Gastrocnemius medialis (tissue), 4 donors: ENCODE measurements at regions of chr22 and their contacts with region 1.

Region 1: DNA sequence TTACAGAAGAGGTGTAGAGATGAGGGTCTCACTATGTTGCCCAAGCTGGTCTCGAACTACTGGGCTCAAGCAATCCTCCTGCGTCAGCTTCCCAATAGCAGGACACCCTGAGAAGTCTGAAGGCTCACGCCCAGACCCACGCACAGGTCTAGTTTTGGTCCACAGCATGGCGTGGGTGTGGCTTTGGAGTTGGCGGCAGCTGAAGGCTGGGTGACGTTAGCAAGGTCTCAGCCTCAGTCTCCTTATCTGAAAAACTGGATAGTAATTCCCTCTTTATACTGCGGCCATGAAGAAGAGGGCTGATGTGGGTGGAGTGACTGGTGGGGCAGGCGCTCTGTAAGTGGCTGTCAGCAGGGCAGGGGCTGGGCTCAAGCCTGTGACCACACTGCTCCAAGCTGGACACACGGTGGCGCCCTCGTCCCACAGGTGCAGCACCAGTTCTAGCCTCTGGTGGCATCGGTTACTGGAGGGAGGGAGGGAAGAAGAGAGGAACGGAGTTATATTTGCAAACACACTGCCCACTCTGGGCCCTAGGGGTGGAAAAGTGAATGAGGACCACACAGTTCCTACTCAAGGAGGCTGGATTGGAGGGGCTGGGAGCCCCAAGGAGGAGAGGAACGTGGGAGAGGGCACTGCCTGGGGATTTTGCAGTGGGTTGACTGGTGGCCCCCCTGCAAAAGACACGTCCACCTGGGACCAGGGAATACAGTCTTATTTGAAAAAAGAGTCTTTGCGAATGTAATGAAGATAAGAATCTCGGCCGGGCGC is 19.6 kb upstream of the CARD10 start:
- DNase-seq: peak; percentile 80 to 82
- ATAC-seq: peak; percentile 91 to 97
- H3K4me3 ChIP-seq: no peak overlapping the region
- H3K27ac ChIP-seq: no peak overlapping the region
- H3K4me1 ChIP-seq: no peaks in the 10 kb centered on the region
- H3K27me3 ChIP-seq: no peaks in the 10 kb centered on the region
- CTCF ChIP-seq: peak; percentile 89 to 94 (median 92)
- POLR2A ChIP-seq: no peak

Region 2: GRCh38 chr22:37484133-37484824 is 54.5 kb before region 1 on chr22:
- in situ Hi-C with region 1: no loop called
- intact Hi-C with region 1: no loop called
- DNase-seq: peak; percentile 47 to 61
- ATAC-seq: peak in 1 of 2 donors; percentile 43
- H3K4me3 ChIP-seq: peak overlapping the region; percentile 33 to 53 (median 42)
- H3K27ac ChIP-seq: peak overlapping the region; percentile 51 to 74 (median 67)
- H3K4me1 ChIP-seq: peaks cover 5 to 16% of the 10 kb centered on the region in 2 donors
- H3K27me3 ChIP-seq: peaks cover 0 to 8% (median 3%) of the 10 kb centered on the region in 3 donors
- CTCF ChIP-seq: no peak
- POLR2A ChIP-seq: no peak

Region 3: GRCh38 chr22:37566903-37567820 is 28.4 kb after region 1 on chr22:
- in situ Hi-C with region 1: loop called in 2 of 4 experiments (anchors 5 kb)
- intact Hi-C with region 1: loop called (anchors 1 kb)
- DNase-seq: peak; percentile 41 to 61
- ATAC-seq: peak; percentile 73 to 75
- H3K4me3 ChIP-seq: no peak overlapping the region
- H3K27ac ChIP-seq: peak overlapping the region; percentile 34 to 83 (median 52)
- H3K4me1 ChIP-seq: peaks cover 14 to 20% of the 10 kb centered on the region in 2 donors
- H3K27me3 ChIP-seq: peaks cover 3 to 17% (median 13%) of the 10 kb centered on the region in 3 donors
- CTCF ChIP-seq: peak; percentile 90 to 97 (median 93)
- POLR2A ChIP-seq: no peak

Region 4: DNA sequence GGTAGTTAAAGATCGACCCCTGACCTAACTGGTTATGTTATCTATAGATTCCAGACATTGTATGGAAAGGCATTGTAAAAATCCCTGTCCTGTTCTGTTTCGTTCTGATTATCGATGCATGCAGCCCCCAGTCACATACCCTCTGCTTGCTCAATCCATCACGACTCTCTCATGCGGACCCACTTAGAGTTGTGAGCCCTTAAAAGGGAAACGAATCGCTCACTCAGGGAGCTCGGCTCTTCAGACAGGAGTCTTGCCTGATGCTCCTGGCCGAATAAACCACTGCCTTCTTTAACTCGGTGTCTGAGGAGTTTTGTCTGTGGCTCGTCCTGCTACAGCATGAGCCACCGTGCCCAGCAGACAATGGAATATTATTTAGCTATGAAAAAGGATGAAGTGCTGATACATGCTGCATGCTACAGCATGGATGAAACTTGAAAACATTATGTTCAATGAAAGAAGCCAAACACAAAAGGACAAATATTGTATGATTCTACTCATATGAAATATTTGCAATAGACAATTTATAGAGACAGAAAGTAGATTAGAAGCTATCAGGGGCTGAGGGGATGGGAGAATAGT is 53.1 kb after region 1 on chr22:
- in situ Hi-C with region 1: loop called in 1 of 4 experiments (anchors 10 kb)
- intact Hi-C with region 1: loop called (anchors 1 kb)
- DNase-seq: no peak
- ATAC-seq: no peak
- H3K4me3 ChIP-seq: no peak overlapping the region
- H3K27ac ChIP-seq: no peak overlapping the region
- H3K4me1 ChIP-seq: no peaks in the 10 kb centered on the region
- H3K27me3 ChIP-seq: no peaks in the 10 kb centered on the region
- CTCF ChIP-seq: no peak
- POLR2A ChIP-seq: no peak

Region 5: DNA sequence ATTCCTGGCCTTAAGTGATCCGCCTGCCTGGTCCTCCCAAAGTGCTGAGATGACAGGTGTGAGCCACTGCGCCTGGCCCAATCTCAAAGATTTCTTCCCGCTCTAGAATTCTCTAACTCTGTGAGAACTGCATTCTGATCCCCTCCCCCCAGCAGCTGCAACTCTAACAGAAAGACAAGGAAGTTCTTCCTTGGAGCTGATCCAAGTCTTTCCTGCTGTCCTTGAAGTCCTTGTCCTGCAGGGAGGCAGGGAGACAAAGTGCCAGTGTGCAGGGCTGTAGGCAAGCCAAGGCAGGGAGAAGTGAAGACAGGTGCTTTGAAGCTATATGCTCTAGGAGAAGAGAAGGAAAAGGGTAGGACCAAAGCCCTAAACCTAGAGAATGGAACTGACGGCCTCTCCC is 60.4 kb after region 1 on chr22:
- in situ Hi-C with region 1: loop called in 1 of 4 experiments (anchors 10 kb)
- intact Hi-C with region 1: no loop called
- DNase-seq: peak in 1 of 2 donors; percentile 41
- ATAC-seq: peak in 1 of 2 donors; percentile 39
- H3K4me3 ChIP-seq: no peak overlapping the region
- H3K27ac ChIP-seq: no peak overlapping the region
- H3K4me1 ChIP-seq: peaks cover 0 to 8% of the 10 kb centered on the region in 2 donors
- H3K27me3 ChIP-seq: no peaks in the 10 kb centered on the region
- CTCF ChIP-seq: no peak
- POLR2A ChIP-seq: no peak

Region 6: DNA sequence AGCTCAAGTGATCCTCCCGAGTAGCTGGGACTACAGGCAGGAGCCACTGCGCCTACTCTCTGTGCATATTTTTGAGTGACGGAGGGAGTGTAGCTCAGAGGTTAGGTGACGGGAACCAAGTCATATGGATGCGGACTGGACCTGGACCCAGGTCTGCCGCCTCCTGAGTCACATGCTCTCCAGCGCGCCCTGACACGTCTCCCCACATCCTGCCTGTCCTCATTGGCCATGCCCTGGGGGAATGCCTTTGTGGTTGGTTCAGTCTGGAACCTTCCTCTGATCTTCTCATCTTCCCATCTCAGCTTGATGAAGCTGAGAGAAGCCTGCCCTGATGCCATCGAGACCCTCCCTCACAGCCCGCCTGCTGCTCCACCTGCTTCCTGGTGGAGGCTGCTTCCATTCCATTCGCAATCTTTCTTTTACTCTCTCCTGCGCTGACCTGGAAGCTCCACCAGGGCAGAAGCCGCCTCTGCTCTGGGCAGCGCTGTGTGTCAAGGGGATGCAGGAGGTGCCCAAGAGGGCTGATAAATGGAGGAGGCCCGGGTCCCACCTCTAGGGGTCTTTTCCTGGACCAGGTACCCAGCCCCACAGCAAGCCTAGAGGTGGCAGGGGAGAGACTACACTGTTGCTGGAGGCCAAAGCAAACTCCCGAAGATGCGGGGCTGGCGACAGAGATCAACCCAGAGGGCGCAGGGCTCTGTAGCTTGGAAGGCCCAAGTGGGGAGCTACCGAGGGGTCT is 585.6 kb after region 1 on chr22:
- in situ Hi-C with region 1: no loop called
- intact Hi-C with region 1: no loop called
- DNase-seq: no peak
- ATAC-seq: no peak
- H3K4me3 ChIP-seq: no peak overlapping the region
- H3K27ac ChIP-seq: no peak overlapping the region
- H3K4me1 ChIP-seq: peaks cover 0 to 4% of the 10 kb centered on the region in 2 donors
- H3K27me3 ChIP-seq: no peaks in the 10 kb centered on the region
- CTCF ChIP-seq: no peak
- POLR2A ChIP-seq: no peak